Right cardiac atrium (tissue), 5 donors: ENCODE measurements at regions of chr22 and their contacts with region 1.

Region 1: GRCh38 chr22:23315341-23315917 is 135.1 kb downstream of the BCR start:
- DNase-seq: peak in 2 of 3 donors; percentile 82 to 88
- ATAC-seq: peak in 1 of 2 donors; percentile 51
- H3K4me3 ChIP-seq: no peak overlapping the region
- H3K27ac ChIP-seq: no peak overlapping the region
- H3K4me1 ChIP-seq: no peaks in the 10 kb centered on the region
- H3K27me3 ChIP-seq: no peaks in the 10 kb centered on the region

Region 2: GRCh38 chr22:23204541-23205157 is 110.8 kb before region 1 on chr22:
- intact Hi-C with region 1: no loop called
- DNase-seq: peak; percentile 81 to 93 (median 90)
- ATAC-seq: peak; percentile 86 to 90
- H3K4me3 ChIP-seq: no peak overlapping the region
- H3K27ac ChIP-seq: peak overlapping the region; percentile 22
- H3K4me1 ChIP-seq: peaks cover 16% of the 10 kb centered on the region
- H3K27me3 ChIP-seq: no peaks in the 10 kb centered on the region

Region 3: DNA sequence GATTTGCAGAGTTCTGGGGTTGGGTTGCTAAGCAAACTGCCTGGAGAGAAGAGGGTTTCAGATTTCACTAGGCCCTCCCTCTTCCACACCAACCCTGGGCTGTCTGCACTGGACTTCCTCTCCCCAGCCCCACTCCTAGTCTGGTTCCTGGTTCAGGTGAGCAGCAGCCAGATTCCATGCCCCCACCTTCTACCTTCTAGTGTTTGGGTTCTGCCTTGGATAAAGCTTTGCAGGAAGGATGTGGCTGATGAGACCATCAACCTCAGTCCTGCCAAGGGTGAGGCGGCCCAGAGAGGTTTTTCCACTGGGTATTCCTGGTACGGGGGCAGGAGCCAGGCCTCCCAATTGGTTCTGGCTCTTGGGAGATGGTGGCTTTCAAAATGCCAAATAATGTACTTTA is 66.8 kb before region 1 on chr22:
- intact Hi-C with region 1: no loop called
- DNase-seq: peak in 2 of 3 donors; percentile 3 to 11
- ATAC-seq: peak in 1 of 2 donors; percentile 42
- H3K4me3 ChIP-seq: no peak overlapping the region
- H3K27ac ChIP-seq: no peak overlapping the region
- H3K4me1 ChIP-seq: peaks cover 2% of the 10 kb centered on the region
- H3K27me3 ChIP-seq: no peaks in the 10 kb centered on the region

Region 4: DNA sequence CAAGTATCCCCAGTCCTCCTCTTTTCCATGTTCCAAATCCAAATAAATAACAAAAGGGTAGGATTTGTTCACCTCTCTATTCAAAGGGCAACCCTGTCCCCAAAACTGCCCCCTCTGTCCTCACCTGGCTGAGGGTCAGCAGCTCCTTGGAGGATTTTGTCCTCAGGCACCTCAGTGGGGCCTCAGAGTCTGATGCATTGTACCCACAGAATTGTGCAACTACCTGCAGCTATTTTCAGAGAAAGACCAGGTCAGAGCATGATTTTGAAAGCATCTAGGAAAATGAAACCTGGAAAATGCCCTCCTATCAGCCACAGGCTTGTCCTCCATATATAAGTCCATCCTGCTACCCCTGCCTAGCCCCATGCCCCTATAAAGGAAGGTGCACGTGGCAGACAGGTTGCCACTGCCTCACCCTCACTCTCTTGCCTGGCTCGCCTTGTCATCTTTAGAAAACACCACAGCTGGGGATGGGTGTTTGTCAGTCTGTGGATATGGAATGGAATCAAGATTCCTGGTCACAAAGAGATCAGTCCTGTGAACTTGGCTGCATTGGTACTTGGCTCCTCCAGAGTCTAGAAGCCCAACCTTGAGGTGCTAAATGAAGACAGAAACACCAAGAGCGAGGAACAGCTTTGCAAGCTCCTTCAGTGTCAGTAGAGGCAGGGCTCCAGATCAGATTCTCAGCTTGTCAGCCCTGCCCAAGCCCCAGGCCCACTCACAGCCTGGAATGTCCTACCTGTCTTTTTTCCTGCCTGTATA is 53.4 kb after region 1 on chr22:
- intact Hi-C with region 1: no loop called
- DNase-seq: no peak
- ATAC-seq: no peak
- H3K4me3 ChIP-seq: no peak overlapping the region
- H3K27ac ChIP-seq: no peak overlapping the region
- H3K4me1 ChIP-seq: no peaks in the 10 kb centered on the region
- H3K27me3 ChIP-seq: no peaks in the 10 kb centered on the region

Region 5: GRCh38 chr22:23385291-23386244 is 70.1 kb after region 1 on chr22:
- intact Hi-C with region 1: loop called in 2 of 4 experiments (anchors 10 kb)
- DNase-seq: peak; percentile 79 to 93 (median 92)
- ATAC-seq: peak; percentile 77 to 82
- H3K4me3 ChIP-seq: no peak overlapping the region
- H3K27ac ChIP-seq: no peak overlapping the region
- H3K4me1 ChIP-seq: no peaks in the 10 kb centered on the region
- H3K27me3 ChIP-seq: no peaks in the 10 kb centered on the region

Region 6: GRCh38 chr22:23414727-23415431 is 99.5 kb after region 1 on chr22:
- intact Hi-C with region 1: no loop called
- DNase-seq: no peak
- ATAC-seq: peak; percentile 19 to 35
- H3K4me3 ChIP-seq: no peak overlapping the region
- H3K27ac ChIP-seq: no peak overlapping the region
- H3K4me1 ChIP-seq: no peaks in the 10 kb centered on the region
- H3K27me3 ChIP-seq: no peaks in the 10 kb centered on the region

Region 7: GRCh38 chr22:23591201-23591791 is 275.9 kb after region 1 on chr22:
- intact Hi-C with region 1: loop called in 1 of 4 experiments (anchors 10 kb)
- DNase-seq: peak; percentile 64 to 85 (median 76)
- ATAC-seq: peak; percentile 69 to 77
- H3K4me3 ChIP-seq: no peak overlapping the region
- H3K27ac ChIP-seq: no peak overlapping the region
- H3K4me1 ChIP-seq: no peaks in the 10 kb centered on the region
- H3K27me3 ChIP-seq: no peaks in the 10 kb centered on the region